Activated naive CD4-positive, alpha-beta T cell treated with anti-CD3 and anti-CD28 coated beads for 36 hours (primary cell): ENCODE measurements at regions of chr5 and their contacts with region 1.

Region 1: DNA sequence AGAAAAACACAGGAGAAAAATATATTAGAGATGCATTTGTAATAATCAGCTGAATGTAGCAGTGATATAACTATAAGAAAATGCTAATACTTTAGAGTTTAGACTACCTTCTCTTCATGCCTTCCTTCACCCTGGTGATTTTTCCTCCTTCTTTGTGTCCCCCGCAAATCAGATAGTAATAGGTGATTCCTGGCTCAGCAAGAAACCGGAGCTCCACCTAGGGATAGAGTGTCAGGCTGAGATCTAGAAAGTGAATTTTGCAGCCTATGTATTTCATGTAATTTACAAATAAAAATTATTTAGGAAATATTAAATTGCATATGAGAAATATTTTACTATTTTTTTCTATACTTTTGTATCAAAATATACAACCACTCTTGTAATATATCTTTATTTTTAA is 109.8 kb upstream of the ST8SIA4 start:
- DNase-seq: no peak
- H3K4me3 Mint-ChIP-seq: no peak overlapping the region
- H3K27ac Mint-ChIP-seq: no peak overlapping the region
- H3K4me1 Mint-ChIP-seq: no peaks in the 10 kb centered on the region
- H3K27me3 Mint-ChIP-seq: no peaks in the 10 kb centered on the region

Region 2: GRCh38 chr5:100623719-100624118 is 389.2 kb before region 1 on chr5:
- CTCF ChIA-PET with region 1: interaction called, 4 read pairs
- intact Hi-C with region 1: loop called (anchors 2 kb)
- DNase-seq: no peak
- H3K4me3 Mint-ChIP-seq: no peak overlapping the region
- H3K27ac Mint-ChIP-seq: no peak overlapping the region
- H3K4me1 Mint-ChIP-seq: no peaks in the 10 kb centered on the region
- H3K27me3 Mint-ChIP-seq: no peaks in the 10 kb centered on the region